ENCODE measurements at regions of chr11 and their contacts with region 1.

Region 1: GRCh38 chr11:68509066-68509465 is 48.5 kb downstream of the PPP6R3 start:
- DNase-seq: no peak
- H3K4me3 ChIP-seq: no peak overlapping the region
- H3K27ac ChIP-seq: no peak overlapping the region
- H3K4me1 ChIP-seq: no peaks in the 10 kb centered on the region
- H3K27me3 ChIP-seq: no peaks in the 10 kb centered on the region
- CTCF ChIP-seq: no peak

Region 2: GRCh38 chr11:68552542-68552941 is 43.5 kb after region 1 on chr11:
- CTCF ChIA-PET with region 1: interaction called, 12 read pairs
- POLR2A ChIA-PET with region 1: no interaction called
- intact Hi-C with region 1: no loop called
- DNase-seq: no peak
- H3K4me3 ChIP-seq: no peak overlapping the region
- H3K27ac ChIP-seq: no peak overlapping the region
- H3K4me1 ChIP-seq: no peaks in the 10 kb centered on the region
- H3K27me3 ChIP-seq: no peaks in the 10 kb centered on the region
- CTCF ChIP-seq: no peak